ENCODE measurements at regions of chr14 and their contacts with region 1.

Region 1: DNA sequence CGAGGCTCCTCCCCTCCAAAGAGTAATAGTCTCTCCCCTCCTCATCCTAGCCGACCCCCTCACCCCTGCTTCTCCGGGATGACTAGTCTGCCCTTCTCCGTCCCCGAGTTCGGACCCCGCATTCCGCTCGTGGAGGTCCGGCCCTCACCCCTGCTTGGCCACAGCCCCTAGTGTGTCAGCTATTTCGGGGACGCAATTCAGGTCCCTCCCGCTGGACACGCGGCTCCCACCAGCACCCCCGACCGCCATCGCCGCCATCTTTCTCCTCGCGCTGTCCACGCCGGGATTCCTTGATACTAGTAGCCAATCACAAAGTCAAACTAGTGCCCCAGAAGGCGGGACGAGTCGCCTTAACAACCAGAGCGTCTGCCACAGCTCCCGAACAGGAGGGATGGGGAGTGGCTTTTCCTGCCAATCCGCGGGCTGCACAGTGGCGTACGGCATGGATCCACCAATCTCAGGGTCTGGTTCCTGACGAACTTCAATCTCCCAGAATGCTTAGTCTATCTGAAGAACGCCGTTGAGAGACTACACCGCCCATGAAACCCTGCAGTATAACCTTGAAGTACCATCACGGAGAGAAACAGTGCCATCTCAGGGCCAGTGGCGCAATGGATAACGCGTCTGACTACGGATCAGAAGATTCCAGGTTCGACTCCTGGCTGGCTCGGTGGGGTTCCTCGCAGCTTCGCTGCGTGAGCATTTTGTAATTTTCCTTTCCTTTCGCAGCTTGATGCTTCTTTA is at the start of gene PRMT5:
- DNase-seq: peak; percentile 100
- H3K4me3 ChIP-seq: peak within 1 kb of the TSS; percentile 73 to 100 (median 96)
- H3K27ac ChIP-seq: peak within 1 kb of the TSS; percentile 70 to 94
- H3K4me1 ChIP-seq: peaks cover 5 to 18% (median 18%) of the 10 kb centered on the region in 4 experiments
- H3K27me3 ChIP-seq: no peaks in the 10 kb centered on the region

Region 2: GRCh38 chr14:22802860-22803686 is 126.2 kb before region 1 on chr14:
- CTCF ChIA-PET with region 1: no interaction called
- POLR2A ChIA-PET with region 1: no interaction called
- DNase-seq: no peak
- H3K4me3 ChIP-seq: no peak overlapping the region
- H3K27ac ChIP-seq: no peak overlapping the region
- H3K4me1 ChIP-seq: peaks cover 0 to 8% (median 0%) of the 10 kb centered on the region in 4 experiments
- H3K27me3 ChIP-seq: peaks cover 0 to 5% (median 0%) of the 10 kb centered on the region in 5 experiments

Region 3: GRCh38 chr14:22918804-22919600 is 10.3 kb before region 1 on chr14 and contains the start of gene RBM23:
- CTCF ChIA-PET with region 1: interaction called, 28 read pairs
- POLR2A ChIA-PET with region 1: interaction called, 14 read pairs
- DNase-seq: peak; percentile 100
- H3K4me3 ChIP-seq: peak within 1 kb of the TSS; percentile 69 to 98 (median 90)
- H3K27ac ChIP-seq: peak within 1 kb of the TSS; percentile 100
- H3K4me1 ChIP-seq: peaks cover 7 to 29% (median 19%) of the 10 kb centered on the region in 4 experiments
- H3K27me3 ChIP-seq: no peaks in the 10 kb centered on the region

Region 4: GRCh38 chr14:22939684-22940083 is 10.4 kb after region 1 on chr14:
- CTCF ChIA-PET with region 1: interaction called, 18 read pairs
- POLR2A ChIA-PET with region 1: no interaction called
- DNase-seq: no peak
- H3K4me3 ChIP-seq: no peak overlapping the region
- H3K27ac ChIP-seq: no peak overlapping the region
- H3K4me1 ChIP-seq: no peaks in the 10 kb centered on the region
- H3K27me3 ChIP-seq: no peaks in the 10 kb centered on the region

Region 5: GRCh38 chr14:22945642-22946041 is 16.4 kb after region 1 on chr14:
- CTCF ChIA-PET with region 1: interaction called, 25 read pairs
- POLR2A ChIA-PET with region 1: interaction called, 3 read pairs
- DNase-seq: no peak
- H3K4me3 ChIP-seq: no peak overlapping the region
- H3K27ac ChIP-seq: no peak overlapping the region
- H3K4me1 ChIP-seq: no peaks in the 10 kb centered on the region
- H3K27me3 ChIP-seq: no peaks in the 10 kb centered on the region

Measured in common myeloid progenitor, CD34-positive (primary cell).